IMR-90 (cell line): ENCODE measurements at regions of chr19 and their contacts with region 1.

Region 1: GRCh38 chr19:12669270-12670158 is 2.9 kb downstream of the WDR83 start:
- DNase-seq: peak; percentile 85
- ATAC-seq: peak; percentile 54
- H3K4me3 ChIP-seq: peak overlapping the region; percentile 58
- H3K27ac ChIP-seq: peak overlapping the region; percentile 79
- H3K4me1 ChIP-seq: peaks cover 15% of the 10 kb centered on the region
- H3K27me3 ChIP-seq: no peaks in the 10 kb centered on the region
- CTCF ChIP-seq: no peak
- POLR2A ChIP-seq: no peak
- RAD21 ChIP-seq: no peak

Region 2: DNA sequence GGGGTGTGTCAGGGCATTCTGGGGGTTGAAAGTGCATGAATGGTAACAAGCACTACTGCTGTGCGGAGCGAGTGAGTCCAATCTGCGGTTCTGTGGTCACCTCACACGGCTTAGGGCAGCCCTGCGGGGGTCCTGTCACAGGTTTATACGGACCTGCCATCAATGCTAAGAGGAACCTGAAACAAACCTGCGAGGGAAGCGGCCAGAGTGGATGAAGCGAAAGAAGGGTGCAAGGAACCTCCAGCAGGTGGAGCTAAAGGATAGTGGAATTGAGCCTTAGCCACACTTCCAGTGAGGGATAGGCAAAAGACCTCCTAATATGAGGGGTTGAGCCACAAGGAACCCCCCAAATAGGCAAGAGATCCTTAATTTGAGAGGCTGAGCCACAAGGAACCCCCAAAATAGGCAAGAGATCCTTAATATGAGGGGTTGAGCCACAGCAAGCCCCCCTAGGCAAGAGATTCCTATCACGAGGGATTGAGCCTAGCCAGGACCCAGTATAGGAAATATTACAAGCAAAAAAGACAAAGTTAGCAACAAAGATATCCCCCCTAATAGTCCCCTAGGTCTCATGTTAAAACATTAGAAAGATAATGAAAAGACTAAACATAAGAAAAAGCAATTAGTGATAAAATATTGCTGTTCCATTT is 788.2 kb before region 1 on chr19:
- CTCF ChIA-PET with region 1: no interaction called
- POLR2A ChIA-PET with region 1: no interaction called
- dilution Hi-C with region 1: no loop called
- in situ Hi-C with region 1: no loop called
- intact Hi-C with region 1: loop called (anchors 5 kb)
- DNase-seq: peak; percentile 51
- ATAC-seq: peak; percentile 87
- H3K4me3 ChIP-seq: no peak overlapping the region
- H3K27ac ChIP-seq: no peak overlapping the region
- H3K4me1 ChIP-seq: no peaks in the 10 kb centered on the region
- H3K27me3 ChIP-seq: no peaks in the 10 kb centered on the region
- CTCF ChIP-seq: peak; percentile 70
- POLR2A ChIP-seq: no peak
- RAD21 ChIP-seq: peak; percentile 88

Region 3: GRCh38 chr19:12465211-12465610 is 204.3 kb before region 1 on chr19:
- CTCF ChIA-PET with region 1: no interaction called
- POLR2A ChIA-PET with region 1: no interaction called
- dilution Hi-C with region 1: no loop called
- in situ Hi-C with region 1: no loop called
- intact Hi-C with region 1: no loop called
- DNase-seq: no peak
- ATAC-seq: no peak
- H3K4me3 ChIP-seq: no peak overlapping the region
- H3K27ac ChIP-seq: no peak overlapping the region
- H3K4me1 ChIP-seq: no peaks in the 10 kb centered on the region
- H3K27me3 ChIP-seq: no peaks in the 10 kb centered on the region
- CTCF ChIP-seq: no peak
- POLR2A ChIP-seq: no peak
- RAD21 ChIP-seq: no peak

Region 4: GRCh38 chr19:12564016-12564664 is 105.4 kb before region 1 on chr19:
- CTCF ChIA-PET with region 1: no interaction called
- POLR2A ChIA-PET with region 1: no interaction called
- dilution Hi-C with region 1: no loop called
- in situ Hi-C with region 1: loop called (anchors 5 kb)
- intact Hi-C with region 1: loop called (anchors 1 kb)
- DNase-seq: peak; percentile 88
- ATAC-seq: peak; percentile 100
- H3K4me3 ChIP-seq: no peak overlapping the region
- H3K27ac ChIP-seq: no peak overlapping the region
- H3K4me1 ChIP-seq: no peaks in the 10 kb centered on the region
- H3K27me3 ChIP-seq: no peaks in the 10 kb centered on the region; the same call in 1 of the 2 replicates
- CTCF ChIP-seq: peak; percentile 97
- POLR2A ChIP-seq: 0 out of 2 replicates have a peak, but pooled peaks have one; percentile 27
- RAD21 ChIP-seq: peak; percentile 94

Region 5: GRCh38 chr19:12610540-12611360 is 58.8 kb before region 1 on chr19 and contains the starts of genes ZNF490 and ZNF791:
- CTCF ChIA-PET with region 1: no interaction called
- POLR2A ChIA-PET with region 1: no interaction called
- dilution Hi-C with region 1: no loop called
- in situ Hi-C with region 1: no loop called
- intact Hi-C with region 1: loop called (anchors 1 kb)
- DNase-seq: peak; percentile 97
- ATAC-seq: peak; percentile 99
- H3K4me3 ChIP-seq: peak within 1 kb of the TSS; percentile 70
- H3K27ac ChIP-seq: peak within 1 kb of the TSS; percentile 81
- H3K4me1 ChIP-seq: no peaks in the 10 kb centered on the region
- H3K27me3 ChIP-seq: no peaks in the 10 kb centered on the region
- CTCF ChIP-seq: peak; percentile 18; the same call in 1 of the 2 replicates
- POLR2A ChIP-seq: peak; percentile 73
- RAD21 ChIP-seq: no peak
- total RNA-seq, gene ZNF490: 8.1 and 9.0 TPM in 2 replicates
- total RNA-seq, gene ZNF791: 15.8 and 19.4 TPM in 2 replicates

Region 6: DNA sequence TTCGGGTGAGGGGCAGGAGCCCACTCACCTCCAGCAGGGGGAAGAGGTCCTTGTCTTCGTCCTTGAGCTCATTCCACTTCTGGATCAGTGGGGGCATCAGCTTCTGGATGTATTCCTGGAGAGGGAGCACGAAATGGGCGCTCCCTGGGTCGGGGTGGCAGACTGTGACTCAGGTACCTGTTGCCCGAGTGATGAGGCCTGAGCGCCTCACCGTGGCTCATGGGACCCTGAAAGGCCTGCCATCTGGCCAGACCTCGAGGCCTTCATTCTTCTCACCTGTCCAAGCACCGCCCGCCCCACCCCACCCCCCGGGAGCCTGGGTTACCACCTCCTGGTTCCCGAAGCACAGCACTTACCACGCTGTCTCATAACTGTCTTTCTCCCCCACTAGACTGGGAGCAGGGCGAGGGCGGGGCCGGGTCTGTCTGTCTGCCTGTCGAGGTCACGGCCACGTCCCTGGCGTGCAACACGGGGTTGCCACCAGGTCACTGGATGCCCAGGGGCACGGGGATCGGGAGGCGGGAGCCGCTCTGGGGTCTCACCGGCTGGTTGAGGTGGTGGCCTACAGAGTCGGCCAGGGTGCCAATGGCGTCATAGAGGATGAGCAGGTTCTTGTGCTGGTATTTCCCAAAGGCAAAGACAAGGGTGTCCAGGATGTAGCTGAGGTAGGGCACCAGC is 36.3 kb after region 1 on chr19:
- CTCF ChIA-PET with region 1: no interaction called
- POLR2A ChIA-PET with region 1: no interaction called
- dilution Hi-C with region 1: no loop called
- in situ Hi-C with region 1: no loop called
- intact Hi-C with region 1: no loop called
- DNase-seq: no peak
- ATAC-seq: no peak
- H3K4me3 ChIP-seq: no peak overlapping the region
- H3K27ac ChIP-seq: no peak overlapping the region
- H3K4me1 ChIP-seq: no peaks in the 10 kb centered on the region
- H3K27me3 ChIP-seq: no peaks in the 10 kb centered on the region
- CTCF ChIP-seq: no peak
- POLR2A ChIP-seq: no peak
- RAD21 ChIP-seq: no peak